PC-3 (cell line): ENCODE measurements at regions of chr3 and their contacts with region 1.

Region 1: DNA sequence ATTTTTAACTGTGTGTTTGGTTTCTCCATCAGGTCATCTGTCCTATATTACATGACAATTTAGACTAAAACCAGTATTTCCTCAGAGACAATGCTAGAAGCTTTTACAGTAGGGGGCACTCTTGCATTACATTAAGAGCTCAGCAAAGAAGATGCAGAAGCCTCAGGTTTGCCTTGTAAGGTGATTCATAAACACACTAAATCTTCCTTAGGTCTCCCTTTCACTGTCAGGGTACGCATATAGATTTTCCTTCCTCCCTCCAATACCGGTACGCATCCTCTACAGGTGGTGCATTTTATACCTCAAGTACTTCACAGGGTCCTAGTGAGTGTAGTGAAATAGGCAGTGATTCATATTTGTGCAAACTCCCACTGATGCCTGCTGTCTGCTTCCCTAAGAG is 46.5 kb downstream of the CD86 start:
- DNase-seq: peak; percentile 87
- ATAC-seq: peak; percentile 83
- H3K4me3 ChIP-seq: no peak overlapping the region
- H3K27ac ChIP-seq: no peak overlapping the region
- H3K4me1 ChIP-seq: no peaks in the 10 kb centered on the region
- H3K27me3 ChIP-seq: no peaks in the 10 kb centered on the region
- CTCF ChIP-seq: peak; percentile 85

Region 2: GRCh38 chr3:122299872-122300460 is 198.3 kb after region 1 on chr3:
- CTCF ChIA-PET with region 1: interaction called, 15 read pairs
- POLR2A ChIA-PET with region 1: no interaction called
- intact Hi-C with region 1: no loop called
- DNase-seq: peak; percentile 82
- ATAC-seq: peak; percentile 70
- H3K4me3 ChIP-seq: no peak overlapping the region
- H3K27ac ChIP-seq: no peak overlapping the region
- H3K4me1 ChIP-seq: peaks cover 6% of the 10 kb centered on the region
- H3K27me3 ChIP-seq: no peaks in the 10 kb centered on the region
- CTCF ChIP-seq: peak; percentile 70

Region 3: GRCh38 chr3:122356415-122356814 is 254.8 kb after region 1 on chr3:
- CTCF ChIA-PET with region 1: no interaction called
- POLR2A ChIA-PET with region 1: no interaction called
- intact Hi-C with region 1: loop called (anchors 5 kb)
- DNase-seq: peak; percentile 76
- ATAC-seq: peak; percentile 72
- H3K4me3 ChIP-seq: no peak overlapping the region
- H3K27ac ChIP-seq: no peak overlapping the region
- H3K4me1 ChIP-seq: peaks cover 10% of the 10 kb centered on the region
- H3K27me3 ChIP-seq: no peaks in the 10 kb centered on the region
- CTCF ChIP-seq: peak; percentile 90